ENCODE measurements at regions of chr2 and their contacts with region 1.

Region 1: GRCh38 chr2:110677530-110678456 is at the start of gene BUB1:
- DNase-seq: peak; percentile 99
- H3K4me3 ChIP-seq: peak within 1 kb of the TSS; percentile 45 to 63 (median 61)
- H3K27ac ChIP-seq: peak within 1 kb of the TSS; percentile 82 to 91 (median 85)
- H3K4me1 ChIP-seq: peaks cover 0 to 20% (median 11%) of the 10 kb centered on the region in 4 donors
- H3K27me3 ChIP-seq: peaks cover 0 to 11% (median 11%) of the 10 kb centered on the region in 3 donors
- CTCF ChIP-seq: no peak
- EP300 ChIP-seq: no peak
- POLR2A ChIP-seq: peak; percentile 68 to 69
- total RNA-seq, gene BUB1: 0.33 to 1.1 (median 0.76) TPM

Region 2: DNA sequence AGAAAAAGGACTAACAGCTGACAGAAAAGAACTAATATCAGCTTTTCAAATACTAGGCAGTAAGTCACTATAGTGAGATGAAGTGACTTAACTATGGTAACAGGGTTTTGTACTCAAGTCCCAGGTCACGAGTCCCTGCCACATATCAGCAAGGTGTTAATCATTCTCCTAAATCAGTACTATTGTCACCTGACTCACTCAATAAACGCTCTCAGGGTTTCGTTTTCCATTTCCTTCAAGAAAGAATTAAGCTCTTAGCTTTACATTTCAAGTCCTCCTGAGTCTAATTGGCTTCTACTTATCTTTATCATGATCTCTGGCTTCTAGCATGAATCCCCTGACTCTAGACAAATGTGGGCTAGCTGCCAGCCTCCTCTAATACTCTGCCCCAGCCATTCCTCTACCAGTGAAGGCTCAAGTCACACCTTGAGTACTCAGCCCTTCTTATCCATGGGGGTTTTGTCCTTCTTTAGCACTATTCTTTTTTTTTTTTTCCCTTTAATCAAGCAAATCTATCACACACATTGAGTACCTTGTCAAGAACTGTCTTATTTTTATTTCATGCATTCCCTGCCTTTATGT is 20.0 kb before region 1 on chr2:
- intact Hi-C with region 1: no loop called
- DNase-seq: no peak
- H3K4me3 ChIP-seq: no peak overlapping the region
- H3K27ac ChIP-seq: no peak overlapping the region
- H3K4me1 ChIP-seq: no peaks in the 10 kb centered on the region
- H3K27me3 ChIP-seq: no peaks in the 10 kb centered on the region
- CTCF ChIP-seq: no peak
- EP300 ChIP-seq: no peak
- POLR2A ChIP-seq: no peak

Region 3: DNA sequence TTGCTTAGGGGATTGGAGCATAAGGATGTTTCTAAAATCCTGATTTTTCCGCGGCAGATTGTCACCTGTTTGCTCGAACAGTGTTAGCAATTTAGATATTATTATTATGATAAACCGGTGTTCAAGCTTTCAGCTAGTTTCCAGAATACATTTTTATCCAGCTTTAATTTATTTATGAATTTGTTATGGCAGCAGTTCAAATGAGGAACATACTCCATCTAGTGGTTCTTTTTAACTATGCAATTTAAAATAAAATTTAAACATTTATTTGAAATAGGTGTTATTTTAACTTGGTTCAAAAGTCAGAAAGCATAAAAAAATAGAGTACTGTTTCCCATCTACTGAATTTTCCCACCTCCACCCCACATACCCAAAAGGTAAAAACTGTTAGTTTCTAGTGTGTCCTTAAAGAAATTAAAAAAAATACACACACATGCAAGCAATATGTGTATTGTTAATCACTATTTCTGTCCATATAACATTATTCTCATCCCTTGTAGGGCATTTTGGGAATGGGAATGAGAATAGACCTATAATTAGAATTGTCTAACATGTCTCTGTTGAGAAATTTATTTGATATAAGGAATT is 77.8 kb after region 1 on chr2:
- intact Hi-C with region 1: loop called (anchors 5 kb)
- DNase-seq: no peak
- H3K4me3 ChIP-seq: no peak overlapping the region
- H3K27ac ChIP-seq: no peak overlapping the region
- H3K4me1 ChIP-seq: no peaks in the 10 kb centered on the region
- H3K27me3 ChIP-seq: no peaks in the 10 kb centered on the region
- CTCF ChIP-seq: peak in 1 of 4 experiments; percentile 49
- EP300 ChIP-seq: no peak
- POLR2A ChIP-seq: no peak